GM13977 (cell line): ENCODE measurements at regions of chr16 and their contacts with region 1.

Region 1: GRCh38 chr16:84175350-84176081 is 11.3 kb downstream of the TAF1C start:
- DNase-seq: peak; percentile 70
- CTCF ChIP-seq: peak; percentile 72

Region 2: DNA sequence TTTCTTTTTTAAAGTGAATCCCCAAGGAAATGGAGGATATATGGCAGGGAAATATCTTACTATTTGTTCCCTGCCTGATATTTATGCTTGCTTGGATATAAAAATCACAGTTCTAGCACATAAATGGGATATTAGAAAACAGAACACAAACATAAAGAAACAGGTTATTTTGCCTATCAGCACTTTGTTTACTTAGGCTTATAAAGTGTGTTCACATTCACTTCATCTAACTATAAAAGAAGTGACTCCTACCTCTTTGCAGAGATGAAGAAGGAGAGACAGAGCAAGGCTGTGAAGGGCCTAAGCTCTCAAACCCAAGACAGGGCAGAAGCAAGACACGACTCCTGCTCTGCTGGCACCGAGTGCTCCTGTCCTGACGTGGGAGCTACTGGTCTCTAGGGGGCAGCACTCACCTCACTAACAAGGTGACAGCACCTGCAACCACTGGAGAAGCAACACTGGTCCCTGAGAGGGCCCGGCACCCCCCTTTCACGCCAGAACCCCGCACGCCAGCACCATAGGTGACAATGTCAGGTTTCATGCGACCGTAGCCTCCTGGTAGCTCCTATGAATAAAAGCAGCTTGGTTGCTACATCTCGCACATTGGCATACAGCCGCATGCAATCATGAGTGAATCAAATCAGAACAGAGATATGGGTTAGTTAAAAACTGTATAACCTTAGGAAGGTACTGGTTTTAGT is 90.8 kb before region 1 on chr16:
- in situ Hi-C with region 1: loop called (anchors 5 kb)
- DNase-seq: peak; percentile 81
- CTCF ChIP-seq: peak; percentile 87